Transverse colon (tissue), 4 donors: ENCODE measurements at regions of chr1 and their contacts with region 1.

Region 1: GRCh38 chr1:170388489-170388888 is 143.5 kb upstream of the GORAB start:
- DNase-seq: no peak
- H3K4me3 ChIP-seq: no peak overlapping the region
- H3K27ac ChIP-seq: no peak overlapping the region
- H3K4me1 ChIP-seq: no peaks in the 10 kb centered on the region
- H3K27me3 ChIP-seq: peaks cover 3% of the 10 kb centered on the region
- CTCF ChIP-seq: no peak
- EP300 ChIP-seq: no peak
- POLR2A ChIP-seq: no peak

Region 2: GRCh38 chr1:170460001-170460400 is 71.5 kb after region 1 on chr1:
- in situ Hi-C with region 1: no loop called
- intact Hi-C with region 1: no loop called
- DNase-seq: no peak
- H3K4me3 ChIP-seq: no peak overlapping the region
- H3K27ac ChIP-seq: no peak overlapping the region
- H3K4me1 ChIP-seq: no peaks in the 10 kb centered on the region
- H3K27me3 ChIP-seq: no peaks in the 10 kb centered on the region
- CTCF ChIP-seq: no peak
- EP300 ChIP-seq: no peak
- POLR2A ChIP-seq: no peak

Region 3: DNA sequence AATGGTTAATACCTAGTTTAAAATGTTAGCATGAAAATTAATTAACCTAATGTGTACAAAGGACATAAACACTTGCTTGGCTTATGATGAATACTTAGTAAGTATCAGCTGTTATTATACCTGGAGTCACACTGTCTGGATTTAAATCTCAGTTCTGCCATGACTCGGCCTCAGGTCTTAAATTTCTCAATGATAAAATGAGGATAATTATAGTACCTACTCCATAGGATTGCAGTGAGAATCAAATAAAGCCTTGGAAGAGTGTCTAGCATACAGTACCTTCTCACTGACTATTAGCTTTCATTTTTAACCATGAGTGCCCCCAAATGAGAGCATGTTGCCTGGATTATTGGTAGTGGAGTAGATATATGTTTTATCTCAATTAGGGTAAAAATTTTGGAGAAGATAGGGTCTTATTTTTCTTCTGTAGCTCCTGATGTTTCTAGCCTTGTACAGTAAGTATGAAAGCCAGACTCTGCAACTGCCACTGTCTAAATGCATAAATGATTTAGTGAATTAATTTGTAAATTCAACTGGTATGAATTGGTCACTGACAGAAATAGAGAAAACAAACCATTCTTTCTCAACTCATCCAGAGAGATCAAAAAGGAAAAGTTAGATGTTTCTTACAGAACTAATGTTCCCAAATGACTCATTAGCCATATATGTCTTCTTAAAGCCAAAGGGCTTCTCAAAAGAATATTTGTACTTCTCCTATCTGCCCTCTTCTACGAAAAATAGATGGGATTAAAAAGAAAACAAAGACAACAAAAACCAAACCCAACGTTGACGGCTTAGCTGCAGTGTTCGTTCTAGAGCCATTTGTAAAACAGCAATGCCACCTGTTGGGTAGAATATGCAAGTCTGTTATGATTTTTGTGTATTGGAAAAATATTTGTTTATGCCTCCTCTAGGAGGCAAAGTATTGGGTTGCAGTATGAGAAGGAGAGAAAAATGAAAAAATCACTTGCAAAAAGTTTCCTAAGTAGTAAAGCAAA is 493.1 kb after region 1 on chr1:
- in situ Hi-C with region 1: no loop called
- intact Hi-C with region 1: loop called (anchors 5 kb)
- DNase-seq: no peak
- H3K4me3 ChIP-seq: peak overlapping the region in 1 of 4 donors; percentile 31
- H3K27ac ChIP-seq: peak overlapping the region in 1 of 4 donors; percentile 31
- H3K4me1 ChIP-seq: peaks cover 0 to 46% (median 13%) of the 10 kb centered on the region in 4 donors
- H3K27me3 ChIP-seq: no peaks in the 10 kb centered on the region
- CTCF ChIP-seq: peak; percentile 33 to 67 (median 45)
- EP300 ChIP-seq: no peak
- POLR2A ChIP-seq: no peak